Calu3 (cell line): ENCODE measurements at regions of chr5 and their contacts with region 1.

Region 1: DNA sequence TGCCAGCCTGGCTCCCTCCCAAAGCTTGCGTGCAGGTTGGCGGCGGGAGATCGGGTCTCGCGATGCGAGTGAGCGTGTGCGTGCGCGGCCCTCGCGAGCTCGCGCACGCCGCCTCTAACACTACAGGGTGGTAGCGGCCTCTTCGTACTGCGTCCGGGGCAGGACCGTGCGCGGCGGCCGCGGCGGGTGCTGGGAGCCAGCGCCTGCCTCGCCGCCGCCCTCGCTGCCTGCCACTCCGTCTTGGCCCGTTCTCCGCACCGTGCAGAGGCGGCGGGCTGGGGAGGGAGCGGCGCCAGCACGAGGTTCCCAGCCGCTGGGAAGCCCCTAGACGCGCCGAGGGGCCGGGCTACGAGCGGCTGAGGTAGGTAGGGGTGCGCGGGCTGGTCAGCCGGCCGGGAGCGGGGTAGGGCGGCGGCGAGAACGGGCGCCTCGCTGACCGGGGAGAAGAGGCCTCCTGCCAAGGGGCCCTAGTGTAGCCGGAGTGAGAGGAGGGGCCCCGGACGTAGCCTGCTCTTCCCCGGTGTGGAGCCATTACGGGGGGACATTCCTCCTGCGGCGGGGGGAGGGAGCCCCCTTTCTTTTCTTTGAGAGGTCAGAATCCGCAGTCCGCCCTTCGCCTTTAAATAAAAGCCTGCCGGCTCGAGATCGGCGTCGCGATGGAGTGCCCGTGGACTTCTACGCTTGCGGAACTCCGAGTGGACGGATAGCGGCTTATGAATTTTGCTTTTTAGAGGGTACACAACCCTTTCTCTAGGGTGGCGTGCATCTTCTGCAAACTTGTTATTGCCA is at the start of gene C5orf24:
- DNase-seq: peak; percentile 95
- H3K4me3 Mint-ChIP-seq: peak within 1 kb of the TSS; percentile 91
- H3K27ac Mint-ChIP-seq: peak within 1 kb of the TSS; percentile 97
- H3K4me1 Mint-ChIP-seq: peaks cover 23% of the 10 kb centered on the region
- H3K27me3 Mint-ChIP-seq: no peaks in the 10 kb centered on the region
- CTCF ChIP-seq: no peak
- total RNA-seq, gene C5orf24: 59.6 and 63.4 TPM in 2 replicates

Region 2: DNA sequence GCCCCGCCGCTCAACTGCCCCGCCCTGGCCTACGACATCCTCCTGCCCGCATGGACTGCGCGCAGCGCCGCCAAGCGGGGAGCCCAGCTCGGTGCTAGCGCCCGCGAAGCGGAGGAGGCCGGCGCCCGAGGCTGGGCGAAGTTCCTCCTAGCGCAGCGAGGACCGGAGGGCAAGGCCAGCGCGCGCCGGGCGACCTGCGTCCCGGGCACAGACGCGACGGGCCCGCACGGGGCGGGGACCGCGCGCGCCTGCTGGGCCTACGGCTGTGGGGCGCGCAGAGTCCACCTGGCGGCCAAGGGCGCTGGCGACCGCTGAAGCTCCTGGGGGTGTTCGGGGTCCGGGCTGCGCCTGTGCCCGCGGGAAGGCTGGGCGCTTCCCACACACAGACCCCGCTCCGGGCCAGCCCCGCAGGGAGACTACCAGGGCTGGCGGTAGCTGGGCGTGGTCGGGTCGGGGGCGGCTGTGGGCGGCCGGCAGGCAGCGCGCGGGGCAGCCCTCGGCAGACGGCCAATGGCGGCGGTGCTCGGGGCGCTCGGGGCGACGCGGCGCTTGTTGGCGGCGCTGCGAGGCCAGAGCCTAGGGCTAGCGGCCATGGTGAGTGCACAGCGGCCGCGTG is 58.7 kb after region 1 on chr5 and contains the start of gene PCBD2:
- CTCF ChIA-PET with region 1: interaction called, 11 read pairs
- intact Hi-C with region 1: loop called (anchors 2 kb)
- DNase-seq: peak; percentile 99
- H3K4me3 Mint-ChIP-seq: peak within 1 kb of the TSS; percentile 82
- H3K27ac Mint-ChIP-seq: peak within 1 kb of the TSS; percentile 92
- H3K4me1 Mint-ChIP-seq: no peaks in the 10 kb centered on the region
- H3K27me3 Mint-ChIP-seq: no peaks in the 10 kb centered on the region
- CTCF ChIP-seq: peak; percentile 96
- total RNA-seq, gene PCBD2: 18.1 and 18.8 TPM in 2 replicates